Colonic mucosa (tissue), 4 donors: ENCODE measurements at regions of chr1 and their contacts with region 1.

Region 1: GRCh38 chr1:156500797-156501499 is 373 bp upstream of the MEF2D start:
- DNase-seq: peak; percentile 96
- H3K4me3 ChIP-seq: peak overlapping the region; percentile 97
- H3K27ac ChIP-seq: peak overlapping the region; percentile 100
- H3K4me1 ChIP-seq: peaks cover 44% of the 10 kb centered on the region
- H3K27me3 ChIP-seq: no peaks in the 10 kb centered on the region
- CTCF ChIP-seq: peak; percentile 36

Region 2: DNA sequence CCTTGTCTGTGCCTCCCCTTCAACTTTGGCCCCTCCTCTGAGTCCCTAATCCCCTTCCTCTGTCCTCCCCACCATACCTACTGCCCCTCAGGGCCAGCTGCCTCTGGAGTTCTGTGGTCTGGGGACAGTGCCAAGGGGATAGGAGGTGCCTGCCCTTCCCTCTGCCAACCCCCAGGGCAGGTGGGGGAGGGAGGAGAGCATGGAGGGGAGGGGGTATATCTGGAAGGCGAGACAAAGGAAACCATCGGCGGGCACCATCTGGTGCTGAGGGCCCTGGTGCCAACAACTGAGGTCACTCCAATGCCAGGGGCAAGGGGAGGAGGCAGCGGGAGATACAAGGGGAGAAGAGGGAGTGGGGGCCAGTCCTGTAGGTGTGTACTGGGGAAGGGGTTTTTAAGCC is 430.4 kb before region 1 on chr1:
- intact Hi-C with region 1: no loop called
- DNase-seq: no peak
- H3K4me3 ChIP-seq: no peak overlapping the region
- H3K27ac ChIP-seq: no peak overlapping the region
- H3K4me1 ChIP-seq: no peaks in the 10 kb centered on the region
- H3K27me3 ChIP-seq: no peaks in the 10 kb centered on the region
- CTCF ChIP-seq: no peak

Region 3: GRCh38 chr1:156456622-156457465 is 44.1 kb before region 1 on chr1:
- intact Hi-C with region 1: loop called (anchors 2 kb)
- DNase-seq: peak; percentile 98
- H3K4me3 ChIP-seq: peak overlapping the region; percentile 41
- H3K27ac ChIP-seq: peak overlapping the region; percentile 99
- H3K4me1 ChIP-seq: no peaks in the 10 kb centered on the region
- H3K27me3 ChIP-seq: no peaks in the 10 kb centered on the region
- CTCF ChIP-seq: no peak

Region 4: DNA sequence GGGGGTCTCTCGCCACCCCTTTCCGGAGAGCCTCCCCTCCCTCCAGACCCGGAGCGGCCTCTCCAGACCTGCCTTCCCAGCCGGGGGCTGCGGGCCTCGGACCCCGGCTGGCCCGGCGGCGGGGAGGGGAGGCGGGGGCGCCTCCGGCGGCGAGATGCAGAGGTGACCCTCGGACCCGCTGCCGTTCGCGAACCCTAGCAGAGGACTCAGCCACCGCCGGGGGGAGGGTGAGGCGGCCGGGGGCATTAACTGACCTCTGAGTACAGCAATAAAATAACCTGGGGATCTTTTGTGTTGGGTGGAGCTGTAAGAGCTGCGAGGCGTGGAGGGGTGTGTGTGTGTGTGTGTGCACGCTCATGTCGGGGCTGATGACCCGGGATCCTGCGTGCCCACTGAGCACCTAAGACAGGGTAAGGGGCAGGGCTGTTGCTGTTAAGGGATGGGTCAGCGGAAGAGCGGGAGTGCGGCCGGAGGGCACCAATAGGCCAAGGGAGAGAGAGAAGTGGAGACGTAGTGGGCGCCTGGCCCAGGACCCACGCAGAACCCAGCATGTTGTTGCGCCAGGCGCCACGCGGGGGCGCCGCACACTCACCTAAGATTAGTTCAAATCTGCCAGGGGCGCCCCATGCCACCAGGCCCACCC is 124.6 kb after region 1 on chr1:
- intact Hi-C with region 1: no loop called
- DNase-seq: peak; percentile 64
- H3K4me3 ChIP-seq: peak overlapping the region; percentile 23
- H3K27ac ChIP-seq: no peak overlapping the region
- H3K4me1 ChIP-seq: peaks cover 21% of the 10 kb centered on the region
- H3K27me3 ChIP-seq: peaks cover 38% of the 10 kb centered on the region
- CTCF ChIP-seq: peak; percentile 65

Region 5: GRCh38 chr1:156656806-156657740 is 156.1 kb after region 1 on chr1:
- intact Hi-C with region 1: no loop called
- DNase-seq: peak; percentile 79
- H3K4me3 ChIP-seq: no peak overlapping the region
- H3K27ac ChIP-seq: no peak overlapping the region
- H3K4me1 ChIP-seq: peaks cover 27% of the 10 kb centered on the region
- H3K27me3 ChIP-seq: no peaks in the 10 kb centered on the region
- CTCF ChIP-seq: peak; percentile 88